ENCODE measurements at regions of chr14 and their contacts with region 1.

Region 1: DNA sequence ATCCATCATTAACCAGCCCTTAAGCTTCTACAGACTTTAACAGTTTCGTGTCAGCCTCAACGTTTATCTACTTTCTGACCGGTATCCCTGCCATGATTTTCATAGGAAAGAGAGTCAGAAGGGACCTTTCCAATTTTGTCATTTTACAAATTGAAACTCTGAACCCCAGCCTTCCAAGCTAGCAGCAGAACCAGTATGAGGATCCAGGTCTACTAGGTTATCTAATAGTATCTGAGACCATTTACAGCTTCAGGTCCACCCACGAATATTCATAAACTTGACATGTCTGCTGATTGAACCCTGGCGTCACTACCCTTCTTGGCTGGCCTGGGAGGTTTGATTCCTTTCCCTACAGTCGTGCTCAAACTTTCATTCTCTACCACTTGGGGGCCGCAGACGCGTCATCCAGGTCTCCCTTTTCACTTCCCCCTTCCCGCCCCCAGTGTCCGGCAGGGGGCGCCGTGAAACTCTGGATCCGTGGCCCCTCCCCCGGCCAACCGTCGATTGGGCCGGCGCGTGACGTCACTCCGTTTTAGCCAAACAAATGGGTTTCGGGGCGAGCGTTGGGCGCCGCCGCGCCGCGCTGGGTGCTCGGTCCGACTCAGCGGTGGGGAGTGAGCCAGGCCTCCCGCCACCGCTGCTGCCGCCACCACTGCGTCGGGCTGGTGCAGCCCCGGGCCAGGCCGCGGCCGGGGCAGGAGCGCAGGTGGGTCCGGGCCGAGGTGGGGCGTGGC is at the start of gene FBXO34:
- DNase-seq: peak; percentile 97
- H3K4me3 ChIP-seq: peak within 1 kb of the TSS; percentile 69 to 98
- H3K27ac ChIP-seq: peak within 1 kb of the TSS; percentile 78 to 79
- H3K4me1 ChIP-seq: peaks cover 13 to 17% of the 10 kb centered on the region in 2 experiments; a peak in 3 of 4 replicates
- H3K27me3 ChIP-seq: no peaks in the 10 kb centered on the region
- CTCF ChIP-seq: peak; percentile 98
- EP300 ChIP-seq: peak in 1 of 2 experiments; percentile 9; a peak in 1 of 4 replicates
- RAD21 ChIP-seq: peak; percentile 83
- polyA plus RNA-seq, gene FBXO34: 10.0 and 13.2 TPM in 2 replicates

Region 2: DNA sequence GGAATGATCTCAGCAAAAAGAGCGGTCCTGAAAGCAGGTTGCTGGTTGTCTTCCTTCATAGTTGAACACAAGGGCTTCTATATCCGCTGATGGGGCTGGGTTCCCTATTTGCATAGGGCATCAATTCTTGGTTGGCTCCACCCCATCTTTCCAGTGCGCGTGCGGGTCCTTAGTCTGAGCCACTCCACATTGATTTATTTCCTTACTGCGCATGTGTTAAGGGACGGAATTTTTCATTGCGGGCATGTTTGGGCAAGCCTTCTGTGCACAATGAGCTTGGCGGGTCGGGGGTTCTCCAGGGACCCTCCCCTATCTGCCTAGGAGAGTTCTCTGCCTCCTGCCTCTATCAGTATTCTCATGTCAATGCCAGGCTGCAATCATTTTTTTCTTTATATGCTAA is 58.4 kb before region 1 on chr14:
- CTCF ChIA-PET with region 1: interaction called, 11 read pairs
- POLR2A ChIA-PET with region 1: no interaction called
- DNase-seq: no peak
- H3K4me3 ChIP-seq: no peak overlapping the region
- H3K27ac ChIP-seq: no peak overlapping the region
- H3K4me1 ChIP-seq: no peaks in the 10 kb centered on the region
- H3K27me3 ChIP-seq: no peaks in the 10 kb centered on the region
- CTCF ChIP-seq: no peak
- EP300 ChIP-seq: no peak
- RAD21 ChIP-seq: no peak

Region 3: DNA sequence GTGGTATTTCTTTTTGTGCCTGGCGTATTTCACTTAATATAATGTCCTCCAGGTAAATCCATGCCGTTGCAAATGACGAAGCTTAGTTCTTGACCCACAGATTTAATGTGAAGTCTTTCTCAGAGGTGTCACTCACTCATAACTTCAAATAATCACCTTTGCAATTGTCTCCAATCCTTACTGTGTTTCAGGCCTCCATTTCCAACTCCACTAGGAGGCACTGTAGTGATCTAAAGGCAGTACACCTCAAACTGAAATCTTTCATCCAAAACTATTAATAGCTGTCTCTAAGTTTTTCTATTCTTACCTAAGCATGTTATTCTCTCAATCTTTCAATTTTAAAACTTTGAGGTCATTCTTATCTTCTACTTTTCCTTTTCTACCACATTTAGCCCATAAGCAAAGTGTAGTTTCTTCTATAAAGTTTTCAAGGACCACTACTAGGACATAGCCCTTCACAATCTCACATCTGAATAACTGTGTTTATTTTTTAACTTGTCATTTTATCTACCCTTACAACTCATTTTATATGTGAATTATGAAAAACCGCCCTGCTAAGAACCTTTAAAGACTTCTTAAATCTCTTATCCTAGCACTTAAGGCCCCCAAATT is 25.2 kb before region 1 on chr14:
- CTCF ChIA-PET with region 1: interaction called, 12 read pairs
- POLR2A ChIA-PET with region 1: no interaction called
- DNase-seq: no peak
- H3K4me3 ChIP-seq: no peak overlapping the region
- H3K27ac ChIP-seq: no peak overlapping the region
- H3K4me1 ChIP-seq: no peaks in the 10 kb centered on the region; a peak in 1 of 4 replicates
- H3K27me3 ChIP-seq: peaks cover 7% of the 10 kb centered on the region
- CTCF ChIP-seq: peak; percentile 72
- EP300 ChIP-seq: no peak
- RAD21 ChIP-seq: peak; percentile 50

Region 4: GRCh38 chr14:55255979-55256378 is 15.0 kb before region 1 on chr14:
- CTCF ChIA-PET with region 1: interaction called, 30 read pairs
- POLR2A ChIA-PET with region 1: interaction called, 4 read pairs
- DNase-seq: no peak
- H3K4me3 ChIP-seq: no peak overlapping the region
- H3K27ac ChIP-seq: no peak overlapping the region
- H3K4me1 ChIP-seq: peaks cover 0 to 4% of the 10 kb centered on the region in 2 experiments; a peak in 1 of 4 replicates
- H3K27me3 ChIP-seq: peaks cover 13% of the 10 kb centered on the region; the same call in 1 of the 2 replicates
- CTCF ChIP-seq: no peak
- EP300 ChIP-seq: no peak
- RAD21 ChIP-seq: no peak

Region 5: GRCh38 chr14:55316567-55316966 is 45.6 kb after region 1 on chr14:
- CTCF ChIA-PET with region 1: interaction called, 11 read pairs
- POLR2A ChIA-PET with region 1: no interaction called
- DNase-seq: no peak
- H3K4me3 ChIP-seq: no peak overlapping the region
- H3K27ac ChIP-seq: no peak overlapping the region
- H3K4me1 ChIP-seq: peaks cover 0 to 3% of the 10 kb centered on the region in 2 experiments; a peak in 1 of 4 replicates
- H3K27me3 ChIP-seq: no peaks in the 10 kb centered on the region
- CTCF ChIP-seq: no peak
- EP300 ChIP-seq: no peak
- RAD21 ChIP-seq: no peak

Region 6: GRCh38 chr14:55348766-55349453 is 77.9 kb after region 1 on chr14:
- CTCF ChIA-PET with region 1: interaction called, 94 read pairs
- POLR2A ChIA-PET with region 1: no interaction called
- DNase-seq: no peak
- H3K4me3 ChIP-seq: no peak overlapping the region
- H3K27ac ChIP-seq: peak overlapping the region in 1 of 2 experiments; percentile 34; a peak in 1 of 4 replicates
- H3K4me1 ChIP-seq: peaks cover 0 to 9% of the 10 kb centered on the region in 2 experiments; a peak in 2 of 4 replicates
- H3K27me3 ChIP-seq: no peaks in the 10 kb centered on the region
- CTCF ChIP-seq: no peak
- EP300 ChIP-seq: no peak
- RAD21 ChIP-seq: no peak

Region 7: GRCh38 chr14:55361190-55361589 is 90.2 kb after region 1 on chr14:
- CTCF ChIA-PET with region 1: interaction called, 94 read pairs
- POLR2A ChIA-PET with region 1: no interaction called
- DNase-seq: no peak
- H3K4me3 ChIP-seq: no peak overlapping the region
- H3K27ac ChIP-seq: no peak overlapping the region
- H3K4me1 ChIP-seq: no peaks in the 10 kb centered on the region; a peak in 1 of 4 replicates
- H3K27me3 ChIP-seq: no peaks in the 10 kb centered on the region
- CTCF ChIP-seq: no peak
- EP300 ChIP-seq: no peak
- RAD21 ChIP-seq: no peak